IMR-90 (cell line): ENCODE measurements at regions of chr1 and their contacts with region 1.

Region 1: DNA sequence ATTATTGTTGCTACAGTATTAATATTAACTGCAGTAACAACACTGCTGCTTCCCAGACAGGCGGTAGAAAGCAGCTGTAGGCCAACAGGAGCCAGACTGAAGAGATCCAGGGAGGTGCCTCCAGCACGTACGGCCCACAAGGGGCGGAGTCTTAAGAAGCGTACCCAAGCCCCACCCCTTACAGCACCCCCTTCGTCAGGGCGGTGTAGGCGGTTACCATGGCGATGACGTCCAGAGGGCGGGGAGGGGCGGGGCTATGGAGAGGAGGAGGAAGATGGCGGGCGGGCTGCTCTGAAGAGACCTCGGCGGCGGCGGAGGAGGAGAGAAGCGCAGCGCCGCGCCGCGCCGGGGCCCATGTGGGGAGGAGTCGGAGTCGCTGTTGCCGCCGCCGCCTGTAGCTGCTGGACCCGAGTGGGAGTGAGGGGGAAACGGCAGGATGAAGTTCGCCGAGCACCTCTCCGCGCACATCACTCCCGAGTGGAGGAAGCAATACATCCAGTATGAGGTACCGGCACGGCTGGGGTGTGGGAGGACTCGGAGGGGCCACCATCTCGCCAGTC is at the start of gene XPR1:
- DNase-seq: peak; percentile 99
- ATAC-seq: peak; percentile 99
- H3K4me3 ChIP-seq: peak within 1 kb of the TSS; percentile 94
- H3K27ac ChIP-seq: peak within 1 kb of the TSS; percentile 89
- H3K4me1 ChIP-seq: no peaks in the 10 kb centered on the region
- H3K27me3 ChIP-seq: no peaks in the 10 kb centered on the region
- CTCF ChIP-seq: peak; percentile 37
- POLR2A ChIP-seq: peak; percentile 74
- RAD21 ChIP-seq: peak; percentile 47
- total RNA-seq, gene XPR1: 25.1 and 25.3 TPM in 2 replicates

Region 2: DNA sequence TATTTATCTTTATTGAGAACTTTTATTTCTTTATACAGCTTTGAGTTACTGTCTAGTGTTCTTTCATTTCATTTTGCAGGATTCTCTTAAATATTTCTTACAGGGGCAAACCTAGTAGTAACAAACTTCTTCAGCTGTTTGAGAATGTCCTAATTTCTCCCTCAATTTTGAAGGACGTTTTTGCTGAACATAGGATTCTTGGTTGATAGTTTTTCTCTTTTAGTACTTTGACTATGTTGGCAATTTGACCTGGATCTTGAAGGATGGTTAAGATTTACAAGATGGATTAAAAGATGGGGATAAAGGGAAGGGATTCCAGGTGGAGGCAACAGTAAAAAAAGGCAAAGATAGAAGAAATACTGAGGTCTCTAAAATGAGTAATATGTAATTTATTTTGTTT is 38.8 kb after region 1 on chr1:
- CTCF ChIA-PET with region 1: no interaction called
- POLR2A ChIA-PET with region 1: no interaction called
- dilution Hi-C with region 1: no loop called
- in situ Hi-C with region 1: no loop called
- intact Hi-C with region 1: no loop called
- DNase-seq: no peak
- ATAC-seq: no peak
- H3K4me3 ChIP-seq: no peak overlapping the region
- H3K27ac ChIP-seq: no peak overlapping the region
- H3K4me1 ChIP-seq: peaks cover 4% of the 10 kb centered on the region
- H3K27me3 ChIP-seq: no peaks in the 10 kb centered on the region
- CTCF ChIP-seq: no peak
- POLR2A ChIP-seq: no peak
- RAD21 ChIP-seq: no peak

Region 3: DNA sequence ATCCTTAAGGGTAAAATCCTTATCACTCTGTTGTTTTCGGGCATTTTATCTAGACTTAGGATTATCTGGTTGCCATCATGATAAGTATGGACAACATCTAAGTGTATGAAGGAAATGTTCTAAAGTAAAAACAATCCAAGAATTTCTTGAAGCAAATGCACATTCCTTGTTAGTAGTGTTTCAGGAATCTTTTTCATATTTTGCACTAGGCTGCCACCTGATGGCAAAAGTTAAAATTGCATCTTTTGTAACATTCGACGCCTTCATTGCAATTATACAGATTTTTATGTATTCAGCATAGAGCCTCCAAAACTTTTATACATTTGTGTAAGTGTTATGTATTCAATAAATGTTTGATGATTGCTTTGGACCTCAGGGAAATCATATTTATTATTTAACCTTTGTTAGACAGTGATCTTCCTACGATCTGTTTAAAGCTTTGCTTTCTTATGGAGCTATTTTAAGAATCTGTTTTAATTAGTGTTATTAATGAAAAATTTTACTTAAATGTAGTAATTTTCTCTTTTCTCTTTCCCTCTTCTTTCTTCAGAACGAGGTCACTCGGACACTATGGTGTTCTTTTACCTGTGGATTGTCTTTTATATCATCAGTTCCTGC is 231.4 kb after region 1 on chr1:
- CTCF ChIA-PET with region 1: interaction called, 7 read pairs
- POLR2A ChIA-PET with region 1: no interaction called
- dilution Hi-C with region 1: no loop called
- in situ Hi-C with region 1: loop called (anchors 10 kb)
- intact Hi-C with region 1: loop called (anchors 1 kb)
- DNase-seq: peak; percentile 68
- ATAC-seq: peak; percentile 95
- H3K4me3 ChIP-seq: no peak overlapping the region
- H3K27ac ChIP-seq: peak overlapping the region; percentile 29; the same call in 1 of the 2 replicates
- H3K4me1 ChIP-seq: no peaks in the 10 kb centered on the region
- H3K27me3 ChIP-seq: no peaks in the 10 kb centered on the region
- CTCF ChIP-seq: peak; percentile 80
- POLR2A ChIP-seq: no peak
- RAD21 ChIP-seq: peak; percentile 86

Region 4: DNA sequence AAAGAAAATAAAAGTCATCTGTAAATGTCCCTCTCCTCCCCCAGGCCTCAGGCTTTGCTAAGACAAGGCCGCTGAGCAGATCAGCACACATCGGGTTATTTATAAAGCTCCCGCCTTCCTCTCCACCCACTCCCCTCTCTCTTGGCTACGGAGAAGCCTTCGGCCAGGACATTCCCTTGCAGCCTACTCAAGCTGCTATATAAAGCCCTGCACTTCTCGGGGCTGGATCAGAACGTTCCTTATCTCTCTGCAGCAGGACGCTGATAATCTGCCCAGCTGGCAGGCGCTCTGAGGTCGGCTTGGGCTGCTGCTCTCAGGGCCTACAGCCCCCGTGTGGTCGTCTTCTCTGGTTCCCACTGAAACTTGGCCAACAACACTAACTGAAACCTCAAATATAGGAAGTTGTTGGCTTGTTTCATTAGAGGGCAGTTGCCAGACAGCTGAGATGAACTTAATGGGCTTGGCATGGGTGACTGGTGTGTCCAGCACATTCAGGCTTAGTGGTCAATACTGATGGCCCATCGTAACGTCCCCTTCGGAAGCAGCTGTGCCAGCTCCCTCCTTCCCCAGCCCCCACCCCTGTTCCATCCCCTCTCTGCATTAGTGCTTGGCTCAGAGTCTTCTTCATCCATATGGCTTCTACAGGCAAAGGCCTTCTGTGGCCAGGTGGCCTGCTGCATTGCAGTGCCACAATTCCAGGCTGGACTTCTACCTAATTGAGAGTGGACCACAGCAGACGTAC is 521.2 kb after region 1 on chr1:
- CTCF ChIA-PET with region 1: no interaction called
- POLR2A ChIA-PET with region 1: no interaction called
- dilution Hi-C with region 1: no loop called
- in situ Hi-C with region 1: loop called (anchors 10 kb)
- intact Hi-C with region 1: loop called (anchors 5 kb)
- DNase-seq: peak; percentile 94
- ATAC-seq: peak; percentile 95
- H3K4me3 ChIP-seq: no peak overlapping the region
- H3K27ac ChIP-seq: peak overlapping the region; percentile 32
- H3K4me1 ChIP-seq: peaks cover 6% of the 10 kb centered on the region
- H3K27me3 ChIP-seq: no peaks in the 10 kb centered on the region
- CTCF ChIP-seq: peak; percentile 45
- POLR2A ChIP-seq: peak; percentile 83
- RAD21 ChIP-seq: peak; percentile 47